ENCODE measurements at regions of chr1 and their contacts with region 1.

Region 1: GRCh38 chr1:31789259-31790065 is 25.3 kb upstream of the ADGRB2 start:
- DNase-seq: peak; percentile 60 to 100
- H3K4me3 ChIP-seq: peak overlapping the region; percentile 79 to 89 (median 88); a peak in 6 of 8 replicates
- H3K27ac ChIP-seq: no peak overlapping the region
- H3K4me1 ChIP-seq: peaks cover 3 to 8% (median 4%) of the 10 kb centered on the region in 4 experiments; a peak in 5 of 7 replicates
- H3K27me3 ChIP-seq: no peaks in the 10 kb centered on the region
- CTCF ChIP-seq: peak; percentile 95 to 98 (median 97)
- EP300 ChIP-seq: peak in 1 of 2 experiments; percentile 42; a peak in 1 of 3 replicates
- POLR2A ChIP-seq: no peak
- RAD21 ChIP-seq: peak; percentile 97 to 100

Region 2: GRCh38 chr1:31239653-31240241 is 549.7 kb before region 1 on chr1 and contains the start of gene NKAIN1:
- CTCF ChIA-PET with region 1: no interaction called
- POLR2A ChIA-PET with region 1: no interaction called
- DNase-seq: peak; percentile 19 to 75
- H3K4me3 ChIP-seq: peak within 1 kb of the TSS; percentile 75 to 79 (median 78)
- H3K27ac ChIP-seq: no peak within 1 kb of the TSS
- H3K4me1 ChIP-seq: peaks cover 5 to 12% (median 6%) of the 10 kb centered on the region in 4 experiments; a peak in 6 of 7 replicates
- H3K27me3 ChIP-seq: peaks cover 0 to 22% (median 12%) of the 10 kb centered on the region in 4 experiments; a peak in 5 of 7 replicates
- CTCF ChIP-seq: no peak
- EP300 ChIP-seq: no peak
- POLR2A ChIP-seq: peak in 1 of 2 experiments; percentile 63; a peak in 1 of 3 replicates
- RAD21 ChIP-seq: no peak
- total RNA-seq, gene NKAIN1: 59.1 and 59.3 TPM in 2 replicates

Region 3: GRCh38 chr1:31657037-31657804 is 132.2 kb before region 1 on chr1:
- CTCF ChIA-PET with region 1: interaction called, 80 read pairs
- POLR2A ChIA-PET with region 1: no interaction called
- DNase-seq: no peak
- H3K4me3 ChIP-seq: no peak overlapping the region
- H3K27ac ChIP-seq: no peak overlapping the region
- H3K4me1 ChIP-seq: no peaks in the 10 kb centered on the region
- H3K27me3 ChIP-seq: no peaks in the 10 kb centered on the region
- CTCF ChIP-seq: no peak
- EP300 ChIP-seq: no peak
- POLR2A ChIP-seq: no peak
- RAD21 ChIP-seq: no peak

Region 4: GRCh38 chr1:31699341-31699891 is 90.0 kb before region 1 on chr1:
- CTCF ChIA-PET with region 1: interaction called, 27 read pairs
- POLR2A ChIA-PET with region 1: interaction called, 4 read pairs
- DNase-seq: no peak
- H3K4me3 ChIP-seq: no peak overlapping the region
- H3K27ac ChIP-seq: no peak overlapping the region
- H3K4me1 ChIP-seq: peaks cover 4 to 13% (median 5%) of the 10 kb centered on the region in 4 experiments
- H3K27me3 ChIP-seq: no peaks in the 10 kb centered on the region
- CTCF ChIP-seq: no peak
- EP300 ChIP-seq: no peak
- POLR2A ChIP-seq: no peak
- RAD21 ChIP-seq: no peak

Region 5: GRCh38 chr1:31753707-31754349 is 35.6 kb before region 1 on chr1:
- CTCF ChIA-PET with region 1: interaction called, 206 read pairs
- POLR2A ChIA-PET with region 1: interaction called, 8 read pairs
- DNase-seq: no peak
- H3K4me3 ChIP-seq: no peak overlapping the region
- H3K27ac ChIP-seq: no peak overlapping the region
- H3K4me1 ChIP-seq: peaks cover 6 to 23% (median 18%) of the 10 kb centered on the region in 4 experiments
- H3K27me3 ChIP-seq: no peaks in the 10 kb centered on the region
- CTCF ChIP-seq: no peak
- EP300 ChIP-seq: no peak
- POLR2A ChIP-seq: no peak
- RAD21 ChIP-seq: no peak

Region 6: DNA sequence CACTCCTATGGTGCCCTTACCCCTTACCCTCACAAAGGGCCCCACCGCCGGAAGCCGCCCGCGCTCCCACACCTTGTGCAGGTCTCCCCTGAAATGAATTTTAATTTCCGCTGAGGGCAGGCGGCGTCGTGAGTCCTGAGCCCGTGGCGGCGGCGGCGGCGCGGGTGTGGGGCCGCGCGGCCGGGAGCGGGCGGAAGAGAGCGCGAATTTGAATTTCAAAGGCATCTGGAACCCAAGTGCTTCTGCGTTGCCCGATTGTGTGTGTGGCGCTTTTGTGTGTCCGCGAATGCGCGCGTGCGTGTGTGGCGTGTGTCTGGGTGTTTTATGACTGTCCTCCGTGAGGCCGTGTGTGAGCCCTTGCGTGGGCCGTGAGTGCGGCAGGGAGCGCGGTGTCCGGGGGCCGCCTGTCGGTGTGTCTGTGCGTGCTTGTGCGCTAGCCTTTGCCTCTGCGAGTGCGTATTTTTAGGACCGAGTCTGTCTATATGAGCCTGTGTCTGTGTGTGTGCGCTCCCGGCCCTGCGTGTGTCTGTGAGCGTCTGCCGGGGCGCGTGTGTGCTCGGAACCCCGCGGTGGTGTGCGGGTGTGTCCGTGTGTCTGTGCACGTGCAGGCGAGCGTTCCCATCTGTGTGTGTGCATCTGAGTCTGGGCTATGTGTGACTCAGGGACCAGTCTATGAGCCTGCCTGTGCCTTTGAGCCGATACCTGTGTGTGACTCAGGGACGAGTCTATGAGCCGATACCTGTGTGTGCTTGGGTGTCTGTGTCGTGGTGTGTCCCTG is 17.4 kb before region 1 on chr1:
- CTCF ChIA-PET with region 1: interaction called, 206 read pairs
- POLR2A ChIA-PET with region 1: interaction called, 6 read pairs
- DNase-seq: no peak
- H3K4me3 ChIP-seq: peak overlapping the region; percentile 41 to 58 (median 50)
- H3K27ac ChIP-seq: no peak overlapping the region
- H3K4me1 ChIP-seq: peaks cover 4 to 18% (median 9%) of the 10 kb centered on the region in 4 experiments
- H3K27me3 ChIP-seq: peaks cover 26 to 49% (median 44%) of the 10 kb centered on the region in 4 experiments
- CTCF ChIP-seq: no peak
- EP300 ChIP-seq: no peak
- POLR2A ChIP-seq: no peak
- RAD21 ChIP-seq: no peak

Region 7: DNA sequence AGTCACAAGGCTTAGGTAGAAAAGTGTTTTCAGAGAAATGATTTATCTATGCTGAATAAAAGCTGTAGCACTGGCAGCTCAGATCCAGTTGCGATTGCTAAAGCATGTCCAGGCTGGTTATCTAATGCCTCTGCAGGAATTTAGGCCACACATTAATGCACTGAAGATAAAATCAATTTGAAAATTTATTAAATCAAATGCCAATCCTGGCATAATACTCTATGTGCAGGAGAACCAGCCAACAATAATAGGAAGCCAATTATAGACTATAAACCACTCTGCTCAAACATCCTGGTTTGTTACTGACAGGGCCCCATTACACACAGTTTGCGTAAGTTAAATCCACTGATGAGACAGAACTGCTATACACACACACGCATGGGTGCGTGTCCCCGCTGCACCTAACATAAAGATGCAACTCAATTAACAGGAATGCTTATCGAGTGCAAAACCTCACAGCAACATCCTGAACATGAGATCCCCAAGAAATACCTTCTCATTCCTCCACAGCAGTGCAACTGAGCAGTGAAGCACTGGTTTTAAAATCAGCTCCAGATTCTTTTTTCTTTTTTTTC is 108.2 kb after region 1 on chr1:
- CTCF ChIA-PET with region 1: no interaction called
- POLR2A ChIA-PET with region 1: no interaction called
- DNase-seq: no peak
- H3K4me3 ChIP-seq: no peak overlapping the region
- H3K27ac ChIP-seq: no peak overlapping the region
- H3K4me1 ChIP-seq: no peaks in the 10 kb centered on the region
- H3K27me3 ChIP-seq: no peaks in the 10 kb centered on the region
- CTCF ChIP-seq: no peak
- EP300 ChIP-seq: no peak
- POLR2A ChIP-seq: no peak
- RAD21 ChIP-seq: no peak

Measured in H1 (cell line).